ENCODE measurements at regions of chr3 and their contacts with region 1.

Region 1: DNA sequence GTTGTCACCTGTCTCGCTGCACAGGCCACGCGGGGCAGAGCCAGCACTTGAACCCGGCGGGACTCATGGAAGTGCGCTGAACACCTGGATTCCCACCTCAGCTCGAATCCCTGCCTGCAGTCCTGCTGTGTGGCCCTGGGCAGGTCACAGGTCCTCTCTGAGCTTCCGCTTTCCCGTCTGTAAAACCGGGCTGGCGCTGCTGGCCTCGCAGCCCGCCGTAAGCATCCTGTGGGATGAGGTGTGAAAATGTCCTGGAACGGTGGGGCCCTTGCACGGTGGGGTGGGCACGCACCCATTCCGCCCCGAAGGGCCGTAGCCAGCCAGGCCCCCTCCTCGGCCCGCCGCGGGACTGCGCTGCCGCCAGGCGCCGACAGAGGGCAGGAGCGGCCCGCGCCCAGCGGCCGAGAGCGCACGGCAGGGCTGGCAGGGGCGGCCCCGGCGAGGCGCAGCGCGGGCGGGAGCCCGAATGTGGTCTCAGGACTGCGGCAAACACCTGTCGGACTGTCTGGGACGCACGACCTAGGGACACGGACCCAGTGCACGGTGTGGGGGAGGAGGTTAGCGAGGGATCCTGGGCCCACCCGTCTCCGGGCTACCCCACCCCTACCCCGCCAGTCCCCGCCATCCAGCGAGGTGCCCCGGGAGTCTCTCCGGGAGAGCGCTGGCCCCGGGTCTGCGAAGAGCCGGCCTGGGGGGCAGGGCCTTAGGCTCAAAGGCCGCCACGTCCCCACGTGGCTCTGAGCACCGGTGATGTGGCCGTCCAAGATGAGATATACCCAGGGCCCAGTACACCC is 40.4 kb downstream of the DNAJB8 start:
- DNase-seq: peak; percentile 57
- H3K4me3 Mint-ChIP-seq: no peak overlapping the region
- H3K27ac Mint-ChIP-seq: no peak overlapping the region
- H3K4me1 Mint-ChIP-seq: no peaks in the 10 kb centered on the region
- H3K27me3 Mint-ChIP-seq: peaks cover 47% of the 10 kb centered on the region

Region 2: DNA sequence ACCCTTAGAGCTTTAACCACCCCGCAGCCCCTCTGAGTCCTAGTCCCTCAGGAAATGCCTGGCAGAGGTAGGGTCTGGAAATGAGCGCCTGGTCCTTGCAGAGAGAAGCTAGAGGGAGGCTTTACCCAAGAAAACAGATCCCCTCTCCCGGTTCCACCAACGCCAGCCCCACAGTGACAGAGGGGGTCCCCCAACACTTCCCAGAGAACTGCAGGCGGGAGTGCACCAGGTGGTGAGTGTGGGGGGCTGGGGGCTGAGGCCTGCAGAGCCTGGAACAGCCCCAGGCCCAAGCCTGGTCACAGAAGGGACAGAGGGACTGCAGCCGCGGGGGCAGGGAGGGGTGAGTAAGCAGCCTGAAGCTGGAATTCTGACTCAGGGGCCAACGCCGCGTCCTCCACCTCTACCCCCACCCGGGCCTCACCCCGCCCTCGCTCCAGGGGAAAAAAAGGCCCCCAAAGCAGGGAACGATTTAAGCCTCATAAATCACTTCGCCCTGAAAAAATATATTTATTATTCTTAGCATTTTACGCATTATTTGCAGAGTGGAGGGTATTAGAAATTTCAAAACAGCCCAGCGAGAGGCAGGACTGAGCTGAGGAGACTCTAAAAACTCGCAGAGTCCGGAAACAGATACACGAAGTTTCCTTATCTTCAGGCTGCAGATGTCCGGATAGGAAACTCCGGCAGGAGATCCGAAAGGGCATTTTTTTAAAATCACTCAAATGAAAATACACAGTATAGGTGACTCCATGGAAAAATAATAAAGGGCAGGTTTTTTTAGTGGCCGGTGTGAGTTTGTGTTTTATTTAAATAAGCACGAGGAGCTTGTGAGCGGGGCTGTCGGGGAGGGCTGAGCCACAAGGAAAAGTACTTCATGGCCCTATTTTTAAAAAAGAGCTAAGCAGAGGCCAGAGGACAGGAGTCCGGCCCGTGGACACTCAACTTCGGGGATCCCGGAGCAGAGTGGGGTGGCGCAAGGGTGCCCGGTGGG is 56.6 kb after region 1 on chr3:
- CTCF ChIA-PET with region 1: interaction called, 15 read pairs
- DNase-seq: no peak
- H3K4me3 Mint-ChIP-seq: no peak overlapping the region
- H3K27ac Mint-ChIP-seq: no peak overlapping the region
- H3K4me1 Mint-ChIP-seq: peaks cover 20% of the 10 kb centered on the region
- H3K27me3 Mint-ChIP-seq: peaks cover 93% of the 10 kb centered on the region

Region 3: DNA sequence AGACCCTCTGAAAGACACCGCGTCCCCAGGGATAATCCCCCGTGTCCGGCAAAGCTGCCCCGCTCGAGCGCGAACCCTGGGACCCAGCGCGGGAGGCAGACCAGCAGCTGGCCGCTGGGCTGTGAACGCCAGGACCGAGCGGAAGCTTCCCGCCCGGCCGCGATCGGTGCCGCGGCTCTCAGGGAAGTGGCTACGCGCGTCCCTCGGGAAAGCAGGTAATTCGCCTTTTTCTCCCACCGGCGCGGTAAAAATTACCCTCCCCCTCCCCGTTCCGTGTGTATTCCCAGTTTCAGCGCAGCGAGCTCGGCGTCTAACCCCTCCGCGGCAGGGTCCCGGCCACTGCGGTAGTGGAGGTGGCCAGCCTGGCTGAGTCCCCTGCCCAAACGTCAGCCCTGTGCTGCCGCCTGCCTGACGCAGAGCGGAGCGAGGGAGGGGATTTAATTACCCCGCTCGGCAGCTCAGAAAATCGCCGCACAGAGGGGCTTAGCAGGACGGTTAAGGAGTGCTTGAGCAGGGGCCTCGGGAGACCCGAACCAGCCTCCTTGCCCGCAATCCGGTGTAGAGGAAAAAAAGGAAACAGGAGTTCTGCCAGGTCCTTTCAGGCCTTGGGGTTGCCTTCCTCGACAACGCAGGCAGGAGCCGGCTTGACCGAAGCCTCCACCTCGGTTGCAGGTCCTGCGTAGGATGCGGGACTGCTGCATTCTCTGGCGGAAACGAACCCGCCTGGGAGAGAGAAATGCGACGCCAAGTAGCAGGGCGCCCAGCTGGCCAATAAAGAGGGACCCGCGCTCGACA is 63.7 kb after region 1 on chr3:
- CTCF ChIA-PET with region 1: interaction called, 62 read pairs
- DNase-seq: peak; percentile 25
- H3K4me3 Mint-ChIP-seq: peak overlapping the region; percentile 49
- H3K27ac Mint-ChIP-seq: peak overlapping the region; percentile 82
- H3K4me1 Mint-ChIP-seq: peaks cover 23% of the 10 kb centered on the region
- H3K27me3 Mint-ChIP-seq: peaks cover 100% of the 10 kb centered on the region

Region 4: DNA sequence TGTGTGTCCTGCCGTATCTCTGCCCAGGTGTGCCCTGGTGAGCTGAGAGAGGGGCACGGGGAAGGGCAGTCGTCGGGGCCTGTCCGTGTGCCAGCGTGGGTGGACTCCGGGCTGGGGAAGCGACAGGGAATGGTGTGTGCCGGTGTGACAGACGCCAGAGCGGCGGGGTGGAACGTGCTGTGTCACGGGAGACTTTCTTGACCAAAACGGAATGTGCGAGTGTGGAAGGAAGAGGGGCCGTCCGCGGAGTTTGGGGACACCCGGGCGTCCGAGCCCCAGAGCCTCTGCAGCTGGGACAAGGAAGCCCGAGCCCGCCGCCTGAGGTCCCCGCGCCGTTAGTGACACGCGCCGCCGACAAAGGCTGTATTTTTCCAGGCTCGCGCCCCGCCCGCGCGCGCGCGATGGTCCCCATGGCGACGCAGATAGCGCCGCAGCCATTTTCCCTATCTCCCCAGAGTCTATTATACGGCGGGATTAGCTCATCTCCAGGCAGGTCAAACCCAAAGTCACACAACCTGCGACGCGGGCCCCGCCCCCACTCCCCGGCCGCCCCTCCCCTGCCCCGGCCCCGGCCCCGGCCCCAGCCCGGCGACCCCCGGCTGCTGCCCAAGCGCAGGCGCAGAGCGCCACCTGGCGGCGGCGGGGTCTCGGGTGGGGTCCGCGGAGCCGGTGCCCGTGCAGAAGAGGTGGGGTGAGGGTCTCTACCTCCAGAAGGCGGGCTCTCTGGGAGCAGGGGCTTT is 71.2 kb after region 1 on chr3:
- CTCF ChIA-PET with region 1: interaction called, 62 read pairs
- DNase-seq: peak; percentile 75
- H3K4me3 Mint-ChIP-seq: peak overlapping the region; percentile 67
- H3K27ac Mint-ChIP-seq: no peak overlapping the region
- H3K4me1 Mint-ChIP-seq: peaks cover 10% of the 10 kb centered on the region
- H3K27me3 Mint-ChIP-seq: peaks cover 85% of the 10 kb centered on the region

Region 5: DNA sequence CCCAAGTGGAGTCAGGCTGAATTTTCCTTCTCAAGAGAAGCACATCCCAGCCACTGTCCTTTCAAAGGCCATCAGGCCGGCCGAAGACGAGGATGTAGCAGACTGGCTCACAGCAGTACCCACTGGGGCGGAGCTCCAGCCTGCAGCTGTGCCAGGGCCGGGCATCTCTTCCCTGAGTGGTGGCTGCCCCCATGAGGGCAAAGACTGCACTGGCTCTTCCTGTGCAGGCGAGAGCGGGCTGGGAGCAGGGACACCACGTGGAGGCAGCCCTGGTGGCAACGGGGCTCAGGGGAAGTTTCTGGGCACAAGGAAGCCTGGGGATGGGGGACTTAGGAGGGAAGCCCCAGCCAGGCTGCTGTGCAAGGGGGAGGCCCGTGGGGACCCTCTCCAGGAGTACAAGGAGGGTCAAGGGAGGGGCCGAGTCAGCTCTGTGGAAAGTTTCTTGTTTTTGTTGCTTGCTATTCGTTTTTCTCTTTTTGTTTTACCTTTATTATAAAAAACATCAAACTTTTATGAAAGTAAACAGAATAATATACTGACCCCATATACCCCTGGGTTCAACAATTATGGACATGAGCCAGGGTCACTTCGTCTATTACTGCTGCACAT is 158.2 kb after region 1 on chr3:
- CTCF ChIA-PET with region 1: interaction called, 19 read pairs
- DNase-seq: peak; percentile 64
- H3K4me3 Mint-ChIP-seq: no peak overlapping the region
- H3K27ac Mint-ChIP-seq: no peak overlapping the region
- H3K4me1 Mint-ChIP-seq: peaks cover 4% of the 10 kb centered on the region
- H3K27me3 Mint-ChIP-seq: peaks cover 46% of the 10 kb centered on the region

Region 6: GRCh38 chr3:128607710-128608048 is 181.4 kb after region 1 on chr3:
- CTCF ChIA-PET with region 1: interaction called, 26 read pairs
- DNase-seq: no peak
- H3K4me3 Mint-ChIP-seq: no peak overlapping the region
- H3K27ac Mint-ChIP-seq: no peak overlapping the region
- H3K4me1 Mint-ChIP-seq: peaks cover 2% of the 10 kb centered on the region
- H3K27me3 Mint-ChIP-seq: peaks cover 32% of the 10 kb centered on the region

Measured in activated naive CD4-positive, alpha-beta T cell treated with anti-CD3 and anti-CD28 coated beads, Interleukin-2, amount 10 ng/mL, durations not matched to agents 7 days and 5 days (primary cell).